Activated CD4-positive, alpha-beta memory T cell treated with anti-CD3 and anti-CD28 coated beads for 36 hours (primary cell): ENCODE measurements at regions of chrX and their contacts with region 1.

Region 1: GRCh38 chrX:20378291-20378920 is 111.7 kb upstream of the RPS6KA3 start:
- DNase-seq: peak; percentile 62
- H3K4me3 Mint-ChIP-seq: no peak overlapping the region
- H3K27ac Mint-ChIP-seq: peak overlapping the region; percentile 91
- H3K4me1 Mint-ChIP-seq: peaks cover 32% of the 10 kb centered on the region
- H3K27me3 Mint-ChIP-seq: no peaks in the 10 kb centered on the region

Region 2: DNA sequence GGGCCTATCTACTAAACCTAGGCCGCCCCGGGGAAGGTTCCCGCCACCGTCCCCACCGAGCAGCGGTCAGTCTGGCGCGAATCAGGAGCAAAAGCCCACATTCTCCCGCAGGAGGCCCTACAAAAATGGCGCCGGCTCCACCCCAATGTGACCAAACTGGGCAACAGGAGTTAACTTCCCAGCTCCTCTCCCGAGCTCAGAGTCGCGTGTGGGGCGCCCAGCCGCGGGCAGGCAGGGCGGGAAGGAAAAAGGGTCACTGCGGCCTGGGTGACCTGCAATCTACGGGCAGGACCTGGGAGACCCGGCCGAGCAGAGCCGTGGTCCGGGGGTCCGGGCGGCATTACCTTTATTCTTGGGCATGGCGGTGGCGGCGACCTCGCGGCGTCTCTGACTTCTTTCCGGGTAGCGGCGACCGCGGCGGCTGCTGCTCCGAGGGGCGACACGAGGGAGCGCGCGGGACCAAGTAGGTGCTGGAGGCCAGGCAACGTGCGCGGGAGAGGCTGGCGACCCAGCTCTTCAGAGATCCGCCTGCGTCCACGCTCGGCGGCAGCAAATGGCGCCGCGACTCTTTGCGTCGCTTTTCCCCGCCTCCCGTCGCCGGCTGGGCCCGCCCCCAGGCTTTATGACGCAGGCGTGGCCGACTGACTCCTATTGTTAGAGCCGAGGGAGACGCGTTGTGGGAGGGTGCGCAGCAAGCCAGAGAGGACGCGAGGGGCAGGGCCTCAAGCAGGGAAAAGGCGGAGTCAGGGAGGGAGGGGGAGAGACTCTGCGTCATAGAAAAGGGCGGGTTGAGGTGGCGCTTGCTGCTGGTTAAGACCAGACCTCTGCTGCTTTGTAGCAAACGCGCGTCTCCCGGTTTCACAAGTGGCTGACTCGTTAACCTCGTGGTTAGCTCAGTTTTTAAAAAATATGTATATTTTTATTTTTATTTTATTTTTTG is 236.9 kb before region 1 on chrX and contains the start of gene EIF1AX:
- CTCF ChIA-PET with region 1: no interaction called
- POLR2A ChIA-PET with region 1: no interaction called
- intact Hi-C with region 1: loop called (anchors 2 kb)
- DNase-seq: peak; percentile 97
- H3K4me3 Mint-ChIP-seq: peak within 1 kb of the TSS; percentile 83
- H3K27ac Mint-ChIP-seq: peak within 1 kb of the TSS; percentile 80
- H3K4me1 Mint-ChIP-seq: peaks cover 39% of the 10 kb centered on the region
- H3K27me3 Mint-ChIP-seq: no peaks in the 10 kb centered on the region
- total RNA-seq, gene EIF1AX: 117 to 121 TPM

Region 3: DNA sequence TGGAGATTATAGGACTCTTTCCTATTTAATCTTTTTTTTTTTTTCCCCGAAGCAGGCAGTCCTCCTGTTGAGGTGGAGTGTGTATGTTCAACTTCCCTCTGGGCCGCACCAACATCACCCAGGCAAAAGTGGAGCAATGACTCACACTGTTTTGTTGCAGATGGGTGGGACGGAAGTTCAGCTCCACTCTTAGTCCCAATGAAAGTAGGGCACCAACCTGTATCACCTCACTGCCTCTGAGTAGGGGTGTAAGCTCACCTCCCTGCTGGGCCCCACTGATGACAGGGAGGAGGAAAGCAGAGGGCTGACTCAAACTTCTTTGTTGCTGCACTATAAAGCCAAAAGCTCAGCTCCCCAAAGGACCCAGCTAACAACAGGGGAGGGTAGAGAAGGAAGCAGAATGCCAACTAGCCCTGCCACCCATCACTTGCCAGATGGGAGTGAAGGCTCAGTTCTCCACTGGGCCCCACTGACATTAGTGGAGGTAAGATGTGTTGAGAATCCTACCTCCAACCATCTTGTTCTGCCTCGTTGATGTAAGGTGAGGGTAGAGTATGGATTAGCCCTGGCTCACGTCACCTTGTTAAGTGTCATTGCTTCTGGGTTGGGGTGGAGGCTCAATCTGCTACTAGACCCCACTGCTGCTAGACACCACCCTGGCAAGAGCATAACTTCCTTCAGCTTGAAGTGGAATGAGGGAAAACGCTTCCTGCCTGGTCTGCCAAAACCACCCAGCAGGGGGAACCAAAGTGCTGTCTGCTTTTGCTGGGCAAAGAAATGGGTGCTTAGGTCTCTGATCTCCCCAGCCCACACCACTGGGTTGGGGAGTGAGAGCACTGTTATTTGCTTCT is 125.8 kb before region 1 on chrX:
- CTCF ChIA-PET with region 1: interaction called, 4 read pairs
- POLR2A ChIA-PET with region 1: interaction called, 3 read pairs
- intact Hi-C with region 1: loop called (anchors 1 kb)
- DNase-seq: peak; percentile 78
- H3K4me3 Mint-ChIP-seq: peak overlapping the region; percentile 23
- H3K27ac Mint-ChIP-seq: peak overlapping the region; percentile 88
- H3K4me1 Mint-ChIP-seq: peaks cover 52% of the 10 kb centered on the region
- H3K27me3 Mint-ChIP-seq: no peaks in the 10 kb centered on the region

Region 4: DNA sequence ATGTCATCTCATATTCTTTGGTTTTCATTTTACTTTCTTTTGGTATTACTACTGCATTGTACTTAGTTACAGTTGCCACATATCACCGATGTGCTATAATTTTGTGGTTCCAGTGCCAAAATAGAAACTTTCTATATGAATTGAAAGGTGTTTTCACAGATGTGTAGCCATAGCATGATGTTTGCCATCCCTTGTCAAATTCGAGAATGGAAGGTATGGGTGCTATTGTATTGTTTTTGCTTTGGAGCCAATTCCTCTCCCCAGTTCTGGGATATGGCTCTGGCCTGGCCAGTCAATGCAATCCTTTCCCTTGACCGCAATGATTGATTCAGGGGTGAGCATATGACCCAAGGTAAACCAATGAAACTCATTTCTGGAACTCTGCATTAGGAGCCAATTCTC is 25.5 kb before region 1 on chrX:
- CTCF ChIA-PET with region 1: no interaction called
- POLR2A ChIA-PET with region 1: no interaction called
- intact Hi-C with region 1: loop called (anchors 1 kb)
- DNase-seq: peak; percentile 19
- H3K4me3 Mint-ChIP-seq: no peak overlapping the region
- H3K27ac Mint-ChIP-seq: no peak overlapping the region
- H3K4me1 Mint-ChIP-seq: peaks cover 24% of the 10 kb centered on the region
- H3K27me3 Mint-ChIP-seq: peaks cover 5% of the 10 kb centered on the region

Region 5: DNA sequence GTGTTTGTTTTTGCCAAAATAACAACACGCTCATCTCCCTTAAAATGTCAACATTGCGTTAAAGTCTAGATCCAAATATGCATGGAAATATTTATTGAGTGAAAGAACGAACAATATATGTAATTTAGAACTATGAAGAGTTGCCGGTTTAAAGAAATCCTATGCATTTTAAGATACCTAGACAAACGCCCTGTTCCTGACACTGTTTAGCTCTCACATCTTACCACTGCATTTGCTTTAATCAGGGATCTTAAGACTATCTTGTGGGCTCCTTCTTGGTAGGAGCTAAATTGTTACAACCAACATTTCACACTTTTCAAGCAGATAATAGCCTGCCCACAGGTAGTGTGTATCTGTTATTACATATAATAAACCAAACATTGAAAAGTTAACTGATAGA is 15.1 kb before region 1 on chrX:
- CTCF ChIA-PET with region 1: no interaction called
- POLR2A ChIA-PET with region 1: no interaction called
- intact Hi-C with region 1: no loop called
- DNase-seq: no peak
- H3K4me3 Mint-ChIP-seq: no peak overlapping the region
- H3K27ac Mint-ChIP-seq: no peak overlapping the region
- H3K4me1 Mint-ChIP-seq: no peaks in the 10 kb centered on the region
- H3K27me3 Mint-ChIP-seq: no peaks in the 10 kb centered on the region

Region 6: GRCh38 chrX:20442597-20442996 is 64.2 kb after region 1 on chrX:
- CTCF ChIA-PET with region 1: no interaction called
- POLR2A ChIA-PET with region 1: no interaction called
- intact Hi-C with region 1: loop called (anchors 2 kb)
- DNase-seq: peak; percentile 89
- H3K4me3 Mint-ChIP-seq: no peak overlapping the region
- H3K27ac Mint-ChIP-seq: no peak overlapping the region
- H3K4me1 Mint-ChIP-seq: peaks cover 60% of the 10 kb centered on the region
- H3K27me3 Mint-ChIP-seq: no peaks in the 10 kb centered on the region